ENCODE measurements at regions of chr2 and their contacts with region 1.

Region 1: DNA sequence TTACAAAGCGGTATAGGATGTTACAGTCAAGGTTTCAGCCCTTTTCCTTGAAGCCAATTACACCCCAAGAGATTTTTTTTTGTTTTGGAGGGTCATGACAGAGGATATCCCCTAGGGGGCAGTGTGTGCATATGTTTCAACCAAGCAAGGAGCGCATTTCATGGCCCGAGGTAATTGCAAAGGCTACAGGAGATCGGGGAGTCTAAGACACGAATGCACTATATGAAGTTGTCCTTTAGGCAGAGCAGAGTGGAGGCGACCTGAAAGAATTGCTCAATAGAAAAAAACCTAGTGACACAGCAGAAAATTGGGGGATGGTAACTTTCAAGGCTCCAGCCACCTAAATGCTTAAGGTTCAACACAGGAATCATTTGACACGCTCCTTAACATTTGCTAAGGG is 219.8 kb upstream of the PARD3B start:
- DNase-seq: peak; percentile 71
- ATAC-seq: peak; percentile 89
- H3K4me3 ChIP-seq: no peak overlapping the region
- H3K27ac ChIP-seq: no peak overlapping the region
- H3K4me1 ChIP-seq: peaks cover 9% of the 10 kb centered on the region; the same call in 1 of the 2 replicates
- H3K27me3 ChIP-seq: no peaks in the 10 kb centered on the region
- CTCF ChIP-seq: peak; percentile 94
- EP300 ChIP-seq: no peak
- POLR2A ChIP-seq: no peak
- RAD21 ChIP-seq: peak; percentile 84

Region 2: DNA sequence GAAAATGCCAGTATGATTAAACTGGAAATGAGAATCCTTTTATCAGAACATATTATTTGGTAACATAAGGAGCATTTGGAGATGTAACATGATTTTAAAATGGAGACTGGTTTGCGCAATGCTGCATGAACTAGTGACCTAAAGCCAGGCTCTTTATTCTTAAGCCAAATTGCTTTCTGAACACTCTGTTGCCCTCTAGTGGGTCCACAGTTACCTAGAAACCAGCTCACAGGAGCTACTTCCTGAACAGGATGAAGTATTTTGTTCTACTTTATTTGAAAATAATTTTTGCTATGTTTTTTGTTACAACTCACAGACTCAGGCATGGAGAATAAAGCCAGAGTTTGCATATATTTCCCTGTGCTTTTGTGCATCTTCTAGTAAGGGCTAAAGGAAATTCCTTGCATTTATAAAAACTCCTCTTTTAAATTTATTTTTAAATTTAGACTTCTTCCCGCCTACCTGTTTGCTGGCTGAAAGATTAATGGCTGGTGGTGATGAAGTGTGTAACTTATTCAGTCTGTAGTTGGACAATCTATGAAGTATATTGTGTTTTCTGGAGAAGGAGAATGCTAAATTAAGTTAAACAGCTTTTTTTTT is 366.5 kb after region 1 on chr2:
- CTCF ChIA-PET with region 1: interaction called, 27 read pairs
- POLR2A ChIA-PET with region 1: no interaction called
- in situ Hi-C with region 1: loop called (anchors 5 kb)
- intact Hi-C with region 1: loop called (anchors 1 kb)
- DNase-seq: peak; percentile 75
- ATAC-seq: peak; percentile 77
- H3K4me3 ChIP-seq: no peak overlapping the region
- H3K27ac ChIP-seq: no peak overlapping the region
- H3K4me1 ChIP-seq: no peaks in the 10 kb centered on the region
- H3K27me3 ChIP-seq: no peaks in the 10 kb centered on the region
- CTCF ChIP-seq: peak; percentile 77
- EP300 ChIP-seq: no peak
- POLR2A ChIP-seq: no peak
- RAD21 ChIP-seq: peak; percentile 66

Region 3: GRCh38 chr2:205696331-205696923 is 1371.0 kb after region 1 on chr2:
- CTCF ChIA-PET with region 1: interaction called, 4 read pairs
- POLR2A ChIA-PET with region 1: no interaction called
- in situ Hi-C with region 1: no loop called
- intact Hi-C with region 1: loop called (anchors 5 kb)
- DNase-seq: peak; percentile 64
- ATAC-seq: peak; percentile 85
- H3K4me3 ChIP-seq: no peak overlapping the region
- H3K27ac ChIP-seq: no peak overlapping the region
- H3K4me1 ChIP-seq: peaks cover 22% of the 10 kb centered on the region
- H3K27me3 ChIP-seq: no peaks in the 10 kb centered on the region
- CTCF ChIP-seq: peak; percentile 89
- EP300 ChIP-seq: 0 out of 4 replicates have a peak, but pooled peaks of 1 of the 2 experiments have one; percentile 10
- POLR2A ChIP-seq: no peak
- RAD21 ChIP-seq: peak; percentile 80

Region 4: GRCh38 chr2:205808486-205809121 is 1483.1 kb after region 1 on chr2:
- CTCF ChIA-PET with region 1: interaction called, 4 read pairs
- POLR2A ChIA-PET with region 1: no interaction called
- in situ Hi-C with region 1: no loop called
- intact Hi-C with region 1: loop called (anchors 1 kb)
- DNase-seq: no peak
- ATAC-seq: no peak
- H3K4me3 ChIP-seq: no peak overlapping the region
- H3K27ac ChIP-seq: no peak overlapping the region
- H3K4me1 ChIP-seq: peaks cover 17% of the 10 kb centered on the region
- H3K27me3 ChIP-seq: peaks cover 3 to 34% of the 10 kb centered on the region in 2 experiments; a peak in 4 of 5 replicates
- CTCF ChIP-seq: no peak
- EP300 ChIP-seq: no peak
- POLR2A ChIP-seq: no peak
- RAD21 ChIP-seq: no peak

Region 5: DNA sequence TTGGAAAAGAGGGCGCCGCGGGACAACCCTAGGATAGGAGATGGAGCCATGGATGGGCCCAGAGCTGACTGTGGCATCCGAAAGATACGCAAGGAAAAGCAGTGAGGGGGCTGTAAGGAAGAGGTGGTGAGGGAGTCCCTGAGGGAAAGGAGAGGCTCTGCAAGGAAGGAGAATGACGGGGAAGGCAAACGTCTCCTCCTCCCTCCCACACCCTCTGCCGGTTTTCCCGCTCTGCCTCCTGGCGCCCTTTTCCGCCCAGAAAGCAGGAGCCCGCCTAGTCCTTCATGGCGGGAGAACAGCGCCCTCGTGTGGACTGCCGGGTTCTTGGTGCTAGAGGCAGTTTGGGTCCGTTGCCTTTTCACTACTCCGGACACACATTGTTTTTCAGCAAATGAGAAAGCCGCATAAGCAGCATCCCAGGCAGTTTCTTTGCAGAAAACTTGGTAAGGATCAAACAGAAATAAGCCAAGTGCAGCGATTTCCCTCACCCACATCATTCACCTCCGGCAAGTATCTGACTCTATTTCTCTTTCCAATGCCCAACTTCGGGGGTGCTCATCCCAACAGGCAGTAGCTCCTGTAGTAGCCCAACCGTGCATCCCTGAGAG is 1560.1 kb after region 1 on chr2:
- CTCF ChIA-PET with region 1: no interaction called
- POLR2A ChIA-PET with region 1: no interaction called
- in situ Hi-C with region 1: loop called (anchors 25 kb)
- intact Hi-C with region 1: no loop called
- DNase-seq: peak; percentile 65
- ATAC-seq: peak; percentile 99
- H3K4me3 ChIP-seq: no peak overlapping the region
- H3K27ac ChIP-seq: no peak overlapping the region
- H3K4me1 ChIP-seq: no peaks in the 10 kb centered on the region
- H3K27me3 ChIP-seq: peaks cover 0 to 3% of the 10 kb centered on the region in 2 experiments; a peak in 1 of 5 replicates
- CTCF ChIP-seq: peak; percentile 97
- EP300 ChIP-seq: no peak
- POLR2A ChIP-seq: no peak
- RAD21 ChIP-seq: peak; percentile 97